ENCODE measurements at regions of chr1 and their contacts with region 1.

Region 1: DNA sequence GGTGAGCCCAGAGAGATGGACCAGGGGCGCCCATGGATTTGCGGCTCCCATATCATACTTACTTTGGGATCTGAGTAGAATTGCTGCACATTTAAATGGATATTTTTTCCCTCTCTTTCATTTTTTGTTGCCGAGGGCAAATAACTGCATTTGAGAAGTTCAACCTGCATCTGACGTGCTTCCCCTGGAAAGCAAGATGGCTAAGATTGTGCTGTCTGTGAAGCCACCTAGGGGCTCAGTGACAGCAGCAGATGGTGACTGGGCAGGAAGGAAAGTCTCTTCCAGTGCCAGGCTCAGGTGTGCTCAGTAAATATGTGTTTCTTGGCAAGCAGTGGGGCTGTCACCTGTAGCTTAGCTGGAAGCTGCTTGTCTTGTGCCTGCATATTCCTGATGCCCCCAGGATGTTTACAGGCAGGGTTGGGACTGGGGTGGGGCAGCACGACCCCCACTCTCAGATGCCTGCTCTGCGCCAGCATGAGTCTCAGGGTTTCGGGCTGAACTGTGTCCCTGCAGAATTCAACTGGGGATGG is 59.8 kb upstream of the ETV3 start:
- DNase-seq: no peak
- H3K4me3 Mint-ChIP-seq: no peak overlapping the region
- H3K27ac Mint-ChIP-seq: no peak overlapping the region
- H3K4me1 Mint-ChIP-seq: no peaks in the 10 kb centered on the region
- H3K27me3 Mint-ChIP-seq: peaks cover 48% of the 10 kb centered on the region

Region 2: DNA sequence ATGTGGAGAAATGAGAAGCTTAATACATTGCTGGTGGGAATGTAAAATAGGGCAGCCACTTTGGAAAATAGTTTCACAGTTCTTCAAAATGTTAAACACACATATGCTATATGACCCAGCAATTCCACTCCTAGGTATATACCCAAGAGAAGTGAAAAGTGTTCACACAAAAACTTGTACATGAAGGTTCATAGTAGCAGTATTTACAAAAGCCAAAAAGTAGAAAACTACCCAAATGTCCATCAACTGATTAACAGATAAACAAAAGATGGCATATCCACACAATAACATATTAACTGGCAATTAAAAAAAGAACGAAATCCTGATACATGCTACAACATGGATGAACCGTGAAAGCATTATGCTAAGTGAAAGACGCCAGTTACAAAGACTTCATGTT is 186.1 kb before region 1 on chr1:
- CTCF ChIA-PET with region 1: no interaction called
- DNase-seq: no peak
- H3K4me3 Mint-ChIP-seq: no peak overlapping the region
- H3K27ac Mint-ChIP-seq: no peak overlapping the region
- H3K4me1 Mint-ChIP-seq: no peaks in the 10 kb centered on the region
- H3K27me3 Mint-ChIP-seq: peaks cover 18% of the 10 kb centered on the region

Region 3: DNA sequence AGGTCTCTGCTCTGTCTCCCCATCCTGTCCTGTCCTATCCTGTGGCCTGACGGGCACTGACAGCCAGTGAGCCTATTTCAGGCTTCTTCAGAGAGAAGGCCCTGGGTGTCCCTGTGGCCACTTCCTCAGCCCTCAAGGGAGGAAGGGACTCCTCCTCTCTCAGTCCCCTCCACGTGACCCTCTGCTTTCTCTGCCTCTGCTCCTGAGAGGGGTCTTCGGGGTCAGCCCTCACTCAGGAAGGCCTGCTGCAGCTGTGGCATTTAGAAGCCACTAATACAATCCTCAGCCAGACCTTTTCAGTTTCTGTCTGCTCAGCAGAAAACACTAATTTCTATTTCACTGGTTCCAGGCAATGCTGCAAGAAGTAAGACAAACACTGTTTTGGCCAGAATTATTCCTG is 16.2 kb before region 1 on chr1:
- CTCF ChIA-PET with region 1: interaction called, 26 read pairs
- DNase-seq: no peak
- H3K4me3 Mint-ChIP-seq: no peak overlapping the region
- H3K27ac Mint-ChIP-seq: no peak overlapping the region
- H3K4me1 Mint-ChIP-seq: no peaks in the 10 kb centered on the region
- H3K27me3 Mint-ChIP-seq: peaks cover 77% of the 10 kb centered on the region

Measured in activated naive CD4-positive, alpha-beta T cell treated with anti-CD3 and anti-CD28 coated beads, Interleukin-2, amount 10 ng/mL, durations not matched to agents 7 days and 5 days (primary cell).